Aorta (tissue), 5 donors: ENCODE measurements at regions of chr2 and their contacts with region 1.

Region 1: GRCh38 chr2:140164449-140164848 is 1384.3 kb upstream of the NXPH2 start:
- DNase-seq: no peak
- ATAC-seq: no peak
- H3K4me3 ChIP-seq: no peak overlapping the region
- H3K27ac ChIP-seq: no peak overlapping the region
- H3K4me1 ChIP-seq: no peaks in the 10 kb centered on the region
- H3K27me3 ChIP-seq: no peaks in the 10 kb centered on the region

Region 2: DNA sequence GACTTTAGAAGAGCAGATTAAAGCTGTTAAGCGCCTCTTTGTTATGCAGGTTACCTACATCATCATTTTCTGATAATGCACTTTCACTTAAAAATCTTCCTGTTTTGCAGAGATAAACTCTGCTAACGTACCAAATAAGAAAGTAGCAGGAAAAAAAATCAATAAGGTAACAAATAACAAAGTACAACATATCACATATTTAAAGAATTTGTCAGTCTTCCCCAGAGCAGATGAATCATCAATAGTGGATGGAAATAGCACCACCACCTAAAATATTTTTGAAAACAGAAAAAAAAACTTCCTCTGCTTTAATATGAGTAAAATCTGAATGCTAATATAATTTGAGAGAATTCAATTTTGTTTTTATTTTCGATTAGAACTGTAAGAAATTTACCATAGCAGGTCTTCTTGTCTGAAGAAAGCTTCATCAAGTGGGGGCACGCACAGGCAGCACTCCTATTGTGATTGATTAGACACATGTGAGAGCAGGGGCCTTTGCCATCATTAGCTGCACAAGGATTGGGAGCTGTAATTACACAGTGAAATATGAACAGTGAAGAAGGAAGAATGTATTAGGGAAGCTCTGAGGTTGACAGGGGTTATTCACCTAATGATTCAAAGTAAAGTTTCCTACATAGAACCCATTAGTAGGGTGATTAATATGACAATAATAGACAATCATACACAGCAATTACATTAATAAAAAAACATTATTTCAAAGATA is 687.0 kb after region 1 on chr2:
- intact Hi-C with region 1: loop called in 1 of 2 experiments (anchors 10 kb)
- DNase-seq: no peak
- ATAC-seq: no peak
- H3K4me3 ChIP-seq: no peak overlapping the region
- H3K27ac ChIP-seq: no peak overlapping the region
- H3K4me1 ChIP-seq: no peaks in the 10 kb centered on the region
- H3K27me3 ChIP-seq: no peaks in the 10 kb centered on the region